ENCODE measurements at regions of chr6 and their contacts with region 1.

Region 1: GRCh38 chr6:797479-798077 is 104.6 kb upstream of the EXOC2 start:
- DNase-seq: peak in 4 of 9 experiments; percentile 23 to 54 (median 35)
- ATAC-seq: no peak
- H3K4me3 ChIP-seq: no peak overlapping the region
- H3K4me3 Mint-ChIP-seq: no peak overlapping the region
- H3K27ac ChIP-seq: no peak overlapping the region
- H3K27ac Mint-ChIP-seq: no peak overlapping the region
- H3K4me1 ChIP-seq: no peaks in the 10 kb centered on the region
- H3K4me1 Mint-ChIP-seq: no peaks in the 10 kb centered on the region
- H3K27me3 ChIP-seq: peaks cover 0 to 2% of the 10 kb centered on the region in 2 experiments
- H3K27me3 Mint-ChIP-seq: peaks cover 31% of the 10 kb centered on the region
- CTCF ChIP-seq: peak; percentile 70

Region 2: GRCh38 chr6:1381481-1382330 is 584.1 kb after region 1 on chr6:
- CTCF ChIA-PET with region 1: no interaction called
- POLR2A ChIA-PET with region 1: no interaction called
- intact Hi-C with region 1: loop called in 1 of 2 experiments (anchors 5 kb)
- DNase-seq: peak in 7 of 9 experiments; percentile 25 to 70 (median 51)
- ATAC-seq: peak; percentile 62
- H3K4me3 ChIP-seq: peak overlapping the region in 1 of 2 experiments; percentile 33
- H3K4me3 Mint-ChIP-seq: peak overlapping the region; percentile 1
- H3K27ac ChIP-seq: no peak overlapping the region
- H3K27ac Mint-ChIP-seq: no peak overlapping the region
- H3K4me1 ChIP-seq: peaks cover 29% of the 10 kb centered on the region
- H3K4me1 Mint-ChIP-seq: peaks cover 32% of the 10 kb centered on the region
- H3K27me3 ChIP-seq: peaks cover 34 to 46% of the 10 kb centered on the region in 2 experiments
- H3K27me3 Mint-ChIP-seq: peaks cover 61% of the 10 kb centered on the region
- CTCF ChIP-seq: peak; percentile 65

Region 3: DNA sequence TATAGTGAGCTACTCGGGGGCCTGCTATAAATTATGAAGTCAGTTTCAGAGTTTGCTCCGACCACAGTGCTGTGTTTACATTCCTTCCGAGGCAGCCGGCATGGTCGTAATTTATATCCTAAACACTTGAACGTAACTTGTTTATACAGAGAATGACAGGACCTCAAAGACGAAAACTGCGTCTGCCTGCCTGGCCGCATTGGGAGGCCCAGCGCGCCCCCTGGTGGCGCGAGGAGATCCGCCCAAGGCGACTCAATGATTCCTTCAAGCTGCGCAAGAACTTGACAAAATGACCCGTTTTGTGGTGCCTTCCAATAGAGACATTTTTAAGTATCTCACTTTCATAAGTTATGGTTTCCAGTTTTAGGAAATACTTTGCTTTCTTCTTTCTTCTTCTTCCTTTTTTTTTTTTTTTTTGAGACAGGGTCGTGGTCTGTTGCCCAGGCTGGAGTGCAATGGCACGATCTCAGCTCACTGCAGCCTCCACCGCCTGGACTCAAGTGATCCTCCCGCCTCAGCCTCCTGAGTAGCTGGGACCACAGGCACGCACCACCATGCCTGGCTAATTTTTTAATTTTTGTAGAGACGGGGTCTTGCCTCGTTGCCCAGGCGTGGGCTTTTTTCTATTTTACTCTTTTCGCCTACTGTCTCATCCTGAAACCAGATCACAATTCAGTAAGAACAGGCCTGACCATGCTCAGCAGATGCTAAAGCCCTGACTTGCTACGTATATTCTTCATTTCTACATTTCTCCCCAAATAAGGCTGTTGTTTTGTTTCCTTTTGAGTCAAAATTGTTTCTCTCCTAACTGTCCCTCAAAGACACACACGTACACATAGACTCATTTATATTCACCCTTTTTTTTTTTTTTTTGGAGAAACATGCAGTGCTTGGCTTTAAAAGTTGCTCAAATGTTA is 599.6 kb after region 1 on chr6:
- CTCF ChIA-PET with region 1: interaction called, 3 read pairs
- POLR2A ChIA-PET with region 1: no interaction called
- intact Hi-C with region 1: loop called in 1 of 2 experiments (anchors 2 kb)
- DNase-seq: peak; percentile 38 to 82 (median 66)
- ATAC-seq: peak; percentile 61
- H3K4me3 ChIP-seq: no peak overlapping the region
- H3K4me3 Mint-ChIP-seq: no peak overlapping the region
- H3K27ac ChIP-seq: no peak overlapping the region
- H3K27ac Mint-ChIP-seq: no peak overlapping the region
- H3K4me1 ChIP-seq: peaks cover 3% of the 10 kb centered on the region
- H3K4me1 Mint-ChIP-seq: peaks cover 5% of the 10 kb centered on the region
- H3K27me3 ChIP-seq: peaks cover 5 to 13% of the 10 kb centered on the region in 2 experiments
- H3K27me3 Mint-ChIP-seq: peaks cover 52% of the 10 kb centered on the region
- CTCF ChIP-seq: peak; percentile 86

Region 4: DNA sequence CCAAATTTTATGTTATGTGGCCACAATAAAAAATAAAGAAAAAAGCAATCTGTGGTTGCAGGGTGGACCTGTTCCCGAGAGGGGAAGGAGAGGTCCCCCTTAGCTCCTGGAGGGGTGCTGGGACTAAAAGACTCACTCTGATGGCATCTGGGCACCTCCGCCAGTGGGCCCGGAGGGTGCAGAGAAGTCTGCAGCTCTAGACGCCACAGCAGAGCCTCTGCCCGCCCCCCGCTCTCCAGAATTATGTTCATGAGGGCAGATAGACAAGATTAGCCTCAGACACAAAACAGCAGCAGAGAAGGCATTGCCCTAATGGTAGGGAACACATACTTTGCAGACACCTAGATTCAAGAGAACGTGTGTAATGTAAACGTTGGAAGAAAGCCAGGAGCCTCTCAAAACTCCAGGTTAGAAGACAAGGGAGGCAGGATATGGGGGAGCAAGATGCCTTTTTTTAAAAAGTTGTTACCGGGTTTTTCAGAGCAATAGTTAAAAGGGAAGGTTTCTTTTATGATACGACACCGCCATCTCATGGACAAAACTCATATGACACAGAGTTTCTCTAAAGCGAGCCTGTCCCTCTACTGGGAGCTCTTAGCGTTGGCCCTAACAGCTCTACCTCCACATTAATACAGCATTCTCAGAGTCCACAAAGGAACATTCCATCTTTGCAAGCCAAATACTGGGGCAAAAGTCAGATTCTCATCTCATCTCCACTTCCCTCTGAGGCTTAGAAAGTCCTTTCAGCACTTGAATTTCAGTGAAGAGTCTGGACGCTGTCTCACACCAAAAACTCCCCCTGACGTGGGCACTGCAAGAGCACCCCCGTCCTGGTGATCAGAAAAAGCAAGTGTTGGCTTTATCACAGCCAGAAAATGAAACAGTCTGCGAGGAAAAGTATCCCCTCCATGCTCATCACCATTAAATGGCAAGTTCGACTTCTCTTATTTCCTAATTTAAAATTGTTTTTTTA is 639.0 kb after region 1 on chr6:
- CTCF ChIA-PET with region 1: interaction called, 4 read pairs
- POLR2A ChIA-PET with region 1: no interaction called
- intact Hi-C with region 1: loop called in 1 of 2 experiments (anchors 2 kb)
- DNase-seq: peak in 6 of 9 experiments; percentile 6 to 67 (median 41)
- ATAC-seq: peak; percentile 71
- H3K4me3 ChIP-seq: no peak overlapping the region
- H3K4me3 Mint-ChIP-seq: no peak overlapping the region
- H3K27ac ChIP-seq: no peak overlapping the region
- H3K27ac Mint-ChIP-seq: no peak overlapping the region
- H3K4me1 ChIP-seq: no peaks in the 10 kb centered on the region
- H3K4me1 Mint-ChIP-seq: no peaks in the 10 kb centered on the region
- H3K27me3 ChIP-seq: peaks cover 0 to 4% of the 10 kb centered on the region in 2 experiments
- H3K27me3 Mint-ChIP-seq: peaks cover 33% of the 10 kb centered on the region
- CTCF ChIP-seq: peak; percentile 70

Measured in CD8-positive, alpha-beta T cell (primary cell).